ENCODE measurements at regions of chr12 and their contacts with region 1.

Region 1: DNA sequence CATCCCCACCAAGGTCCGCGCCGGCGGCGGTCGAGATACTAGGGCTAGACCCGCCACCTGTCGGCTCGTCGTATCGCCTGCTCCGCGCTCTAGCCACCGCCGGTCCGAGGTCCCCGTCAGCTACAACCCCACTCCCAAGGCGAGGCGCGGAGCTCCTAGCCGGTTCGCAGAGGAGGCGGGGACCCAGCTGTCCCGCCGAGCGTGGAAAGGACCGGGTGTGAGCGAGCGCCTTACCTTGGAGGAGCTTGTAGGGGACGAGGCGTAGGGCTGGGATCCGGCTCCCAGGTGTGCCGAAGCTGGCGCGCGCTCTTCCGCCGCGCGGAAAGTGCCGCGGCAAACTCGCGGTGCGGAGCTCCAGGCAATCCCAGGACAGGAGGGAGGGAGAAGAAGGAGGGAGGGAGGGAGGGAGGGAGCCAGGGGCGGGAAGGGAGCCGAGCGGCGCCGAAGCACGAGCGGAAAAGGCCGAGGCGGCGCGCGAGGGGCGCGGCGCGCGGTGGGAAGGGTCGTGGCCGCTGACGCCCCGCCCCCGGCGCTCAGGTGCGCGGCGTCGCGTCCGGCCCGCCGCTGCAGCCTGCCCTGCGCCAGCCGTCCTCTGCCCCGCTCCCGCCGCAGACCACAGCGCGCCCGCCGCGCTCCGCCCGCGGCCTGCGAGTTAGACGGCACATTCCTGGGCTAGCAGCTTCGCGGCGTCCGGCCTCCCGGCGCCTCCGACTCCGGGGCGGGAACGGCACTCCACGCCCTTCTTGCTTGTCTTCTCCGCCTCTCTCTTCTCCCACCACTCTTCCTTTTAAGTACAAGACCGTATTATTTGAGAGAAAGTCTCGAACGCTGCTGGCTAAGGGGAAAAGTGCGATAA is at the start of gene PAWR:
- DNase-seq: peak; percentile 87
- H3K4me3 ChIP-seq: peak within 1 kb of the TSS; percentile 90
- H3K27ac ChIP-seq: peak within 1 kb of the TSS; percentile 84
- H3K4me1 ChIP-seq: peaks cover 18% of the 10 kb centered on the region
- CTCF ChIP-seq: peak; percentile 18; the same call in 1 of the 2 replicates
- total RNA-seq, gene PAWR: 186 and 263 TPM in 2 replicates

Region 2: DNA sequence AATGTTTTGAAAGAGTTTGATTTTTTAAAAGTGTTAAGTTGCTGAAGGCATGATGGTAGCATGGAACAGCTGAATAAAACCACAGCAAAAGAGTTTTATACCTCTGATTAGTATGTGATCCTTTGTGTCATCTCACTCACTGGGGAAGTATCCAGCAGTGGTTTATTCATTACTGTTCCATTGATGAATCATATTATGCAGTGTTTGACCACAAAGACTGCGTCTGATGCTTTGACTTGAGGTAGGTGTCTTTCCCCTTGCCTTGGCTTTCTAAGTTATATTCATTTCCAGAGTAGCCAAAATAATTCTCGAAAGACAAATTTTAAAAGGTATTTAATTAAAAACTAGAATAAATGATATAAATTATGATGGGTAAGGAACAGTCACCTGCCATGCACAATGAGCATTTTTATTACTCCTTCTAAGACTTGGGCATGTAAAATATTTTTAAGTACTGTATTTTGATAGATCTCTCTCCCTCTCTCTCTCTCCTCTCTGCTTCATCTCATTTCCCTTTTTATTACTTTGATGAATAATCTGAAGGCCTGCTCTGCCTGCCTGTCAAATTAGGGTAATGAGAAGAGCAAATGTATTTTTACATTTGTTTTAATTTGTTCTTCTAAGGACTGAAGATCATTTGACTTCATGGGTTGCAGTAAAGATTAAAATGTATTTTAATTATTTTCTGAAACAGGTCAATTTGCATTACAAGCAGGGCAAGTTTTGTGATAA is 1695.3 kb before region 1 on chr12:
- CTCF ChIA-PET with region 1: no interaction called
- POLR2A ChIA-PET with region 1: no interaction called
- intact Hi-C with region 1: loop called (anchors 5 kb)
- DNase-seq: no peak
- H3K4me3 ChIP-seq: no peak overlapping the region
- H3K27ac ChIP-seq: no peak overlapping the region
- H3K4me1 ChIP-seq: peaks cover 45% of the 10 kb centered on the region
- CTCF ChIP-seq: no peak

Region 3: DNA sequence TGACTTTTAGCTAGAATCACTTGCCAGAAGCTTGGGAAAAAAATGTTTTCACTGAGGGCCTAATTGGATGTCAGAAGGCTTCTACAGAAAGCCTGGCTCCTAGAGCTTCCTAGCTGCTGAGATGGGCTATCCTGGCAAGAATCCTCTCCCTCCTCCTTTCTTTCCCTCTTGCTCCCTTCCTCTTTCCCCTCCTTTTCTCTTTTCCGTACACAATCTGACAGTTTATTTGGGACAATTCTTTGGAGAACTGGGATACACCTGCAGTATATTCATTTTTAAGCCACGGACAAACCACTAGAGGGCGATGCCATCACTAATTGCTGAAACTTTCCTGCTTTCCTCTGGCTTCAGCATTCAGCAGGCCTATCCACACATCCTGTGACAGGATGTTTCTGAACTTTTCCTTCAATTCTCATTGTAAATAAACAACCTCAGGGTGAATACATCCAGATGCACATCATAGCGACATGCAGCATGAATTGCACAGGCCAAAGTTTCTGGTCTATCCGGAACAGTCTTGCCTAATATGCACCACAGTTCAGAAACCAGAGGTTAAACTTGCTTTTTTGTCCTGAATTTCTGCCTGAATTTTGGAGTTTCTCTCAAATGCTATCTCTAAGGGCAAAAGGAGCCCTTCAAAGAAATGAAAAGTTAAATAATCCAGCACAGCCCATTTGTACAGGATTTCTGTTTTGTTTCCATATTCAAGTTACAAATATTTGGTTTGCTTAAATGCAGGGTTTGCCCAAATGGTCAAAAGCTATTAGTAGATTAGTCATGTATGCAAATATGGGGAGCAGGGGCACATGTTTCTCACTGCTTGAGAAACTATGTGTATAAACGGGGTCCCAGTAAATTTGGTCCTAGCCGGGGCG is 142.9 kb before region 1 on chr12:
- CTCF ChIA-PET with region 1: no interaction called
- POLR2A ChIA-PET with region 1: interaction called, 4 read pairs
- intact Hi-C with region 1: loop called (anchors 2 kb)
- DNase-seq: peak; percentile 51
- H3K4me3 ChIP-seq: no peak overlapping the region
- H3K27ac ChIP-seq: no peak overlapping the region
- H3K4me1 ChIP-seq: no peaks in the 10 kb centered on the region
- CTCF ChIP-seq: peak; percentile 90

Region 4: GRCh38 chr12:79645235-79645630 is 45.6 kb before region 1 on chr12:
- CTCF ChIA-PET with region 1: no interaction called
- POLR2A ChIA-PET with region 1: interaction called, 10 read pairs
- intact Hi-C with region 1: no loop called
- DNase-seq: no peak
- H3K4me3 ChIP-seq: no peak overlapping the region
- H3K27ac ChIP-seq: no peak overlapping the region
- H3K4me1 ChIP-seq: no peaks in the 10 kb centered on the region
- CTCF ChIP-seq: no peak

Region 5: GRCh38 chr12:79935021-79935623 is 244.3 kb after region 1 on chr12 and contains the start of gene PPP1R12A:
- CTCF ChIA-PET with region 1: no interaction called
- POLR2A ChIA-PET with region 1: interaction called, 4 read pairs
- intact Hi-C with region 1: loop called (anchors 2 kb)
- DNase-seq: peak; percentile 96
- H3K4me3 ChIP-seq: peak within 1 kb of the TSS; percentile 100
- H3K27ac ChIP-seq: peak within 1 kb of the TSS; percentile 87
- H3K4me1 ChIP-seq: peaks cover 25% of the 10 kb centered on the region
- CTCF ChIP-seq: no peak
- total RNA-seq, gene PPP1R12A: 44.5 and 75.3 TPM in 2 replicates

Region 6: DNA sequence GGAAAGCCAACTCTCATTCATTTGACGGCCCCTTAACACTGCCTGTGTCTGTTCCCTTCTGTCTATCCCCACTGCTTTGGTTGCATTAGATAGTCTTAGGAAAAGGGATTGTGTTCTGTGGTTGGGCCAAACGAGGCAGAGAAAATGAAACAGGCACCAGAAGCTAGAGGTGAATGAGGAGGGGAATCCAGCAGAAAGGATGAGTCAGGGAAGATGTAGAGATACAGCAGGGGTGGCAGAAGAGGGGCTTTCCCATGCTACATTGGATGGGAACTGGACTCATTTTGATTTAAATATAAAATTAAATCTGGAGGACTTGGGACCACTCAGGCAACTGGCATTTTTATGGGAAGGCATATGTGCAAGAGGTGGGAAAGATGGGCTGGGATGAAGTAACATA is 451.8 kb after region 1 on chr12:
- CTCF ChIA-PET with region 1: no interaction called
- POLR2A ChIA-PET with region 1: no interaction called
- intact Hi-C with region 1: no loop called
- DNase-seq: no peak
- H3K4me3 ChIP-seq: no peak overlapping the region
- H3K27ac ChIP-seq: no peak overlapping the region
- H3K4me1 ChIP-seq: no peaks in the 10 kb centered on the region
- CTCF ChIP-seq: no peak

Measured in OCI-LY7 (cell line).